Caco-2 (cell line): ENCODE measurements at regions of chr19 and their contacts with region 1.

Region 1: DNA sequence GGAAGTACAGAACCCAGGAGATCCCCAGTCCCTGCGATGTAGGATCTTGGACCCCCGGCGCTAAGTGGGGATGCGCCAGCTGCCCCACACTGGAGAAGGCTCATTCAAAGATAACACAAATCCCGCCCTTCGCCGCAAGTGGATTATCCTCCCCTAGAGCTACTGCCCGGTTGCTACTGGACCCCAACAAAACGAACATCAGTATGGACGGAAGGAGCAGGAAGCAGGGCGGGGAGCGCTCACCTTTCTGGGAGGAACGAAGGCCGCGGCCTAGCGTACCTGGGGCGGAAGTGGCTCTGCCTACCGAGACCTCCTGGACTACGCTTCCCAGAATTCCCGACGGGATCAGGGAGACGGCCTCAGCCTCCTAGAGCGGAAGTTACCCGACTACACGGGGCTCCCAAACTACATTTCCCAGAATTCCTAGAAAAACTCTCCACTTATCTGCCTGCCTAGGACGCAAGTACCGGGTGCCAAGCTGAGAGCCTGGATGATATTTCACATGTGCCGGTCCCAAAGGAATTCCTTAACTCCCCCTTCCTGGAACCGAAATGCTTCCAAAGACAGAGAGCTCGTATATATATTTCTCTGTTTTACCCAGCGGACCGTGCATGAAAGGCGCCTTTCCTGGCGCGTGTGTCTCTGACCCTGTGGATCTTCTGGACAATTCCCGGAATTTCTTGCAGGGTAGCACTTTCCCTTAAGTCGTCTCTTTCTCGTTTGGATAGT is at the start of gene ZNF112:
- DNase-seq: peak; percentile 92 to 96
- H3K4me3 ChIP-seq: peak within 1 kb of the TSS; percentile 47
- H3K4me3 Mint-ChIP-seq: peak within 1 kb of the TSS; percentile 94
- H3K27ac Mint-ChIP-seq: peak within 1 kb of the TSS; percentile 76
- H3K4me1 ChIP-seq: no peaks in the 10 kb centered on the region
- H3K4me1 Mint-ChIP-seq: peaks cover 7% of the 10 kb centered on the region
- H3K27me3 ChIP-seq: no peaks in the 10 kb centered on the region
- H3K27me3 Mint-ChIP-seq: no peaks in the 10 kb centered on the region
- CTCF ChIP-seq: no peak
- total RNA-seq, gene ZNF112: 4.2 and 6.1 TPM in 2 replicates

Region 2: GRCh38 chr19:44207126-44207803 is 149.3 kb before region 1 on chr19:
- CTCF ChIA-PET with region 1: no interaction called
- POLR2A ChIA-PET with region 1: no interaction called
- intact Hi-C with region 1: loop called (anchors 1 kb)
- DNase-seq: peak; percentile 95 to 96
- H3K4me3 ChIP-seq: peak overlapping the region; percentile 43
- H3K4me3 Mint-ChIP-seq: peak overlapping the region; percentile 89
- H3K27ac Mint-ChIP-seq: peak overlapping the region; percentile 80
- H3K4me1 ChIP-seq: no peaks in the 10 kb centered on the region
- H3K4me1 Mint-ChIP-seq: peaks cover 6% of the 10 kb centered on the region
- H3K27me3 ChIP-seq: no peaks in the 10 kb centered on the region
- H3K27me3 Mint-ChIP-seq: peaks cover under 1% of the 10 kb centered on the region
- CTCF ChIP-seq: no peak

Region 3: GRCh38 chr19:44212250-44212865 is 144.2 kb before region 1 on chr19 and contains the start of gene ZNF227:
- CTCF ChIA-PET with region 1: no interaction called
- POLR2A ChIA-PET with region 1: interaction called, 5 read pairs
- intact Hi-C with region 1: loop called (anchors 1 kb)
- DNase-seq: peak; percentile 93 to 95
- H3K4me3 ChIP-seq: peak within 1 kb of the TSS; percentile 64
- H3K4me3 Mint-ChIP-seq: peak within 1 kb of the TSS; percentile 85
- H3K27ac Mint-ChIP-seq: peak within 1 kb of the TSS; percentile 91
- H3K4me1 ChIP-seq: 0 out of 2 replicates have a peak, but pooled peaks cover 6% of the 10 kb centered on the region
- H3K4me1 Mint-ChIP-seq: peaks cover under 1% of the 10 kb centered on the region
- H3K27me3 ChIP-seq: no peaks in the 10 kb centered on the region
- H3K27me3 Mint-ChIP-seq: no peaks in the 10 kb centered on the region
- CTCF ChIP-seq: no peak
- total RNA-seq, gene ZNF227: 25.9 and 27.3 TPM in 2 replicates

Region 4: DNA sequence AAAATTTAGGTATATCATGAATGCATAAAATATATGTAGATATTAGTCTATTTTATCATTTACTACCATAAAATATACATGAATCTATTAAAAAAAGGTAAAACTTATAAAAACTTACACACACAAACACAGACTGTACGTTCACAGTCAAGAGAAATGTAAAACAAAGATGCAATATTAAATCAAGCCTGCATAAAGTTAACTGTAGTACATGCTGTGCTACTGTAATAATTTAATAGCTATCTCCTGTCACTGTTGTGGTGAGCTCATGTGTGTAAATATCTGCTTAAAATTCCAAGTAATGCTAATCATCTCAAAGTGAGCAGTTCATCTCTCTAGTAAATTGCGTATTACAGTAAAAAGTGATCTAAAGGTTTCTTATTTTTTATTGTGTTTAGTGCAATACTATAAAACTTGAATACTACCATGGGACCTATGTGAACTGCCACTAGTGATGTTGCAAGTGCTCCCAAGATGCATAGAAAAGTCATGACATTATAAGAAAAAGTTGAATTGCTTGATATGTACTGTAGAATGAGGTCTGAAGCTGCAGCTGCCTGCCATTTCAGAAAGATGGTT is 97.6 kb before region 1 on chr19:
- CTCF ChIA-PET with region 1: no interaction called
- POLR2A ChIA-PET with region 1: no interaction called
- intact Hi-C with region 1: loop called (anchors 1 kb)
- DNase-seq: no peak
- H3K4me3 ChIP-seq: peak overlapping the region; percentile 71; the same call in 1 of the 2 replicates
- H3K4me3 Mint-ChIP-seq: peak overlapping the region; percentile 88
- H3K27ac Mint-ChIP-seq: no peak overlapping the region
- H3K4me1 ChIP-seq: peaks cover 4% of the 10 kb centered on the region; the same call in 1 of the 2 replicates
- H3K4me1 Mint-ChIP-seq: peaks cover 18% of the 10 kb centered on the region
- H3K27me3 ChIP-seq: no peaks in the 10 kb centered on the region
- H3K27me3 Mint-ChIP-seq: no peaks in the 10 kb centered on the region
- CTCF ChIP-seq: no peak

Region 5: GRCh38 chr19:44304659-44305193 is 51.8 kb before region 1 on chr19 and contains the start of gene ZNF235:
- CTCF ChIA-PET with region 1: no interaction called
- POLR2A ChIA-PET with region 1: no interaction called
- intact Hi-C with region 1: loop called (anchors 1 kb)
- DNase-seq: peak; percentile 90 to 93
- H3K4me3 ChIP-seq: peak within 1 kb of the TSS; percentile 75
- H3K4me3 Mint-ChIP-seq: peak within 1 kb of the TSS; percentile 84
- H3K27ac Mint-ChIP-seq: peak within 1 kb of the TSS; percentile 60
- H3K4me1 ChIP-seq: peaks cover 6% of the 10 kb centered on the region; the same call in 1 of the 2 replicates
- H3K4me1 Mint-ChIP-seq: no peaks in the 10 kb centered on the region
- H3K27me3 ChIP-seq: no peaks in the 10 kb centered on the region
- H3K27me3 Mint-ChIP-seq: no peaks in the 10 kb centered on the region
- CTCF ChIP-seq: no peak
- total RNA-seq, gene ZNF235: 9.2 and 9.5 TPM in 2 replicates

Region 6: GRCh38 chr19:44367024-44367423 is 10.5 kb after region 1 on chr19:
- CTCF ChIA-PET with region 1: no interaction called
- POLR2A ChIA-PET with region 1: no interaction called
- intact Hi-C with region 1: no loop called
- DNase-seq: no peak
- H3K4me3 ChIP-seq: no peak overlapping the region
- H3K4me3 Mint-ChIP-seq: no peak overlapping the region
- H3K27ac Mint-ChIP-seq: no peak overlapping the region
- H3K4me1 ChIP-seq: no peaks in the 10 kb centered on the region
- H3K4me1 Mint-ChIP-seq: no peaks in the 10 kb centered on the region
- H3K27me3 ChIP-seq: no peaks in the 10 kb centered on the region
- H3K27me3 Mint-ChIP-seq: peaks cover 4% of the 10 kb centered on the region
- CTCF ChIP-seq: no peak

Region 7: GRCh38 chr19:44401139-44402115 is 44.9 kb after region 1 on chr19 and contains the start of gene ZNF285:
- CTCF ChIA-PET with region 1: no interaction called
- POLR2A ChIA-PET with region 1: no interaction called
- intact Hi-C with region 1: loop called (anchors 1 kb)
- DNase-seq: peak; percentile 84 to 87
- H3K4me3 ChIP-seq: peak within 1 kb of the TSS; percentile 44
- H3K4me3 Mint-ChIP-seq: peak within 1 kb of the TSS; percentile 82
- H3K27ac Mint-ChIP-seq: peak within 1 kb of the TSS; percentile 69
- H3K4me1 ChIP-seq: no peaks in the 10 kb centered on the region
- H3K4me1 Mint-ChIP-seq: no peaks in the 10 kb centered on the region
- H3K27me3 ChIP-seq: no peaks in the 10 kb centered on the region
- H3K27me3 Mint-ChIP-seq: no peaks in the 10 kb centered on the region
- CTCF ChIP-seq: no peak
- total RNA-seq, gene ZNF285: 0.91 and 1.5 TPM in 2 replicates

Region 8: DNA sequence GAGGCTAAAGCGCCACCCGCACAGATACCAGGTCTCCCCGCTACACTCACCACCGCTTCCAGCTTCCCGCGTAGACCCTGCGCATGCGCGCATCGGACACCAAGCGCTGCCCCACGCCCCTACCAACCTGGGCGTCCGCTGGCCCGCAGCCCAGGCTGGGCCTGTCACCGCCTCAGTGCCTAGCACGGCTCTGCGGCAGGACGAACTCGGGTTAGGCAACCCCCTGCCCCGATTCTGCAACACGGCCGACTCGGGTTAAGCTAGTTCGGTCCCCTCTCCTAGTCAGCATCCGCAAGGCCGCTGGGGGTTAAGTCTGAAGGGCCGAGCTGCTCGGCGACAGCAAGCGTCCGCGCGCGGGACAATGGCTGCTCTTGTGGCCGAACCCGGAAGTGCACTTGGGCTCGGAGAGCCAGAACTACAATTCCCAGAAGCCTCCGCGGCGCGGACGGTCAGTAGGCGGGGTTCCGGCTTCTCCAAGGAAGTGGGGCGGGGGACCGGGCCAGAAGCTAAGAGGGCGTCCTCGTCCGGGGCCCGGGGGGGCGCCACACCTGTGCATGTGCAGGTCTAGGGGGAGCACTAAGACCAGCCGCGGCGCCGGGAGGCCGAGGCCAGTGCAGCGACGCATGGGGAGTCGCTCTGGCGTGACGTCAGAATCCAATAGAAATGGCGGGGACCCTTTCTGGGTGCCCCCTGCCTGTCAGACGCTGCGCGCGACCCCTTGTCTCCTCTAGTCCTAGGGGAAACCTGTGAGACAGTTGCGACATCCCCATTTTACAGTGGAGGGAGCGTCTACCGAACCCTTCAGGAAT is 143.8 kb after region 1 on chr19 and contains the start of gene ZNF180:
- CTCF ChIA-PET with region 1: no interaction called
- POLR2A ChIA-PET with region 1: no interaction called
- intact Hi-C with region 1: loop called (anchors 2 kb)
- DNase-seq: peak; percentile 98 to 99
- H3K4me3 ChIP-seq: peak within 1 kb of the TSS; percentile 99
- H3K4me3 Mint-ChIP-seq: peak within 1 kb of the TSS; percentile 98
- H3K27ac Mint-ChIP-seq: peak within 1 kb of the TSS; percentile 92
- H3K4me1 ChIP-seq: peaks cover 8% of the 10 kb centered on the region; the same call in 1 of the 2 replicates
- H3K4me1 Mint-ChIP-seq: peaks cover 25% of the 10 kb centered on the region
- H3K27me3 ChIP-seq: no peaks in the 10 kb centered on the region
- H3K27me3 Mint-ChIP-seq: peaks cover 4% of the 10 kb centered on the region
- CTCF ChIP-seq: peak; percentile 38 to 83
- total RNA-seq, gene ZNF180: 9.1 and 13.3 TPM in 2 replicates